HEK293 (cell line): ENCODE measurements at regions of chrX and their contacts with region 1.

Region 1: DNA sequence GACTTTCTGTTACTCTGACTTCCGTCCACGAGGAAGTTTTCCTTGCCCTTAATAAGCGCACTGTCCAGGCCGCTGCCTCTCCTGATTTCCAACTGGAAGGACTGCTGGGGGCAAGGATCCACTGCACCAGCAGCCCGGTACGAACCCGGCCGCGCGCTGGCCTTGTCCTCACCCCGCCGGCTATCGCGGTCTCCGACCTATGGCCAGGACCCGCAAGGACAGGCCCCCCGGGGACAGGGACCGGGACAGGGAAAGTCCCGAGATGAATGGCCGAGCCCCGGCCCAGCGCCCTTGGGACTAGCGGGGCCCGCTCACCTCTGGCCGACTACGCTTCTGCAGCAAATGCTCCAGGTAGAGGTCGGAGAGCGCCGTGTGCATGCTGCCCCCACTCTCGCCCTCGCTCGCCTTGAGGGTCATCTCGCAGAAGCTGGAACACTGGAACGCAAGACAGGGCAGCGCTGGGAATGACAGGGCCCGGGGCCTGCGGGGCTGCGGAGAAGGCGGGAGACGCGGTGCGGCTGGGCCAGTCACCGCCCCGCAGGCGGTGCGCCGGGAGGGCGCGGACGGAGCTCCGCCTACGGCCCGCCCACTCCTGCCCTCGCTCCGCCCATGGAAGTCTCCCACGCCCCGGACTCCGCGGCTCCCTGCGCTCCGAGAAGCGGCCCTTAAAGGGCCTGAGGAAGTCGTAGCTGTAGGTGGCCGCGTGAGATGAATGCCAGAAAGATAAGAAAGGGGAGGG is at the start of gene MPP1:
- H3K4me3 ChIP-seq: peak within 1 kb of the TSS; percentile 71
- H3K27ac ChIP-seq: peak within 1 kb of the TSS; percentile 63; the same call in 1 of the 2 replicates
- H3K4me1 ChIP-seq: peaks cover 12% of the 10 kb centered on the region
- CTCF ChIP-seq: 0 out of 2 replicates have a peak, but pooled peaks have one; percentile 41

Region 2: DNA sequence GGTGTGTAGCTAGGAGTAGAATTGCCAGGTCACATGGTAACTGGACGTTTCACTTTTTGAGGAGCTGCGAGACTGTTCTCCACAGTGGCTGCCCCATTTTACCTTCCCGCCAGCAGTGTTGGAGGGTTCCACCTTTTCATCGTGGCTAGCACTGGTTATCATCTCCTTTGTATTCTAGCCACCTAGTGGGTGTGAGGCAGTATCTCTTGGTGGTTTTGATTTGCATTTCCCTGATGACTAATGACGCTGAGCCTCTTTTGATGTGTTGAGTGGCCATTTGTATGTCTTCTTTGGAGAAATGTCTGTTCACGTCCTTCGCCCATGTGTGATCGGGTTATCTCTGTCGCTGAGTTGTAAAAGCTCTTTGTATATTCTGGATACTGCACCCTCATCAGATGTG is 1069.9 kb before region 1 on chrX:
- CTCF ChIA-PET with region 1: no interaction called
- POLR2A ChIA-PET with region 1: no interaction called
- H3K4me3 ChIP-seq: no peak overlapping the region
- H3K27ac ChIP-seq: no peak overlapping the region
- H3K4me1 ChIP-seq: no peaks in the 10 kb centered on the region
- CTCF ChIP-seq: no peak

Region 3: GRCh38 chrX:154762523-154763289 is 42.4 kb before region 1 on chrX and contains the start of gene DKC1:
- CTCF ChIA-PET with region 1: no interaction called
- POLR2A ChIA-PET with region 1: interaction called, 14 read pairs
- H3K4me3 ChIP-seq: peak within 1 kb of the TSS; percentile 73
- H3K27ac ChIP-seq: peak within 1 kb of the TSS; percentile 89
- H3K4me1 ChIP-seq: no peaks in the 10 kb centered on the region
- CTCF ChIP-seq: peak; percentile 77